ENCODE measurements at regions of chr2 and their contacts with region 1.

Region 1: DNA sequence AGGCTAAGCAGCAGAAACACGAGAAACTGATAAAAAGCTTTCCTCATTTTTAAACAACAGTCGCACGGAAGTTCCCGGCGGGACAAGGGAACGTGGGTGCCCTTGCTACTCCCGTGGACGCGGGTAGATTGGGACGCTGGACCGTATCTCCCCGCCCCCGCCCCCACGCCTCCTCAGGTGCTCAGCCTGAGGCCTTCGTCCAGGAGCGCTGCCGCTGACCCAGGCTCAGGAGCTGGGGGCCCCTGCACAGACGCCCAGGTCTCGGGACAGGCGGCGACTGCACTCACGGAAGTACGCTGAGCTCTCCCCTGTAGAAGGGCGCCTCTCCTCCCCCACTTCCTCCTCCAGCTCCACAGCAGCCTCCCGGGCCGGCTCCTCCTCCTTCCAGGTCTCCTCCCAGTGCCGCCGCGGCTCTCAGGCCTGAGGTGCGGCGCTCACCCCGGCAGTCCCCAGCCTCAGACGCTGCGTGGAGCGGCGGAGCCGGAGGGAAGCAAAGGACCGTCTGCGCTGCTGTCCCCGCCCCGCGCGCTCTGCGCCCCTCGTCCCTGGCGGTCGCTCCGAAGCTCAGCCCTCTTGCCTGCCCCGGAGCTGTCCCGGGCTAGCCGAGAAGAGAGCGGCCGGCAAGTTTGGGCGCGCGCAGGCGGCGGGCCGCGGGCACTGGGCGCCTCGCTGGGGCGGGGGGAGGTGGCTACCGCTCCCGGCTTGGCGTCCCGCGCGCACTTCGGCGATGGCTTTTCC is at the start of gene ITGAV:
- DNase-seq: peak; percentile 82
- H3K4me3 Mint-ChIP-seq: peak within 1 kb of the TSS; percentile 94
- H3K27ac Mint-ChIP-seq: peak within 1 kb of the TSS; percentile 86
- H3K4me1 Mint-ChIP-seq: peaks cover 33% of the 10 kb centered on the region
- H3K27me3 Mint-ChIP-seq: peaks cover 9% of the 10 kb centered on the region
- total RNA-seq, gene ITGAV: 9.8 and 10.6 TPM in 2 replicates

Region 2: DNA sequence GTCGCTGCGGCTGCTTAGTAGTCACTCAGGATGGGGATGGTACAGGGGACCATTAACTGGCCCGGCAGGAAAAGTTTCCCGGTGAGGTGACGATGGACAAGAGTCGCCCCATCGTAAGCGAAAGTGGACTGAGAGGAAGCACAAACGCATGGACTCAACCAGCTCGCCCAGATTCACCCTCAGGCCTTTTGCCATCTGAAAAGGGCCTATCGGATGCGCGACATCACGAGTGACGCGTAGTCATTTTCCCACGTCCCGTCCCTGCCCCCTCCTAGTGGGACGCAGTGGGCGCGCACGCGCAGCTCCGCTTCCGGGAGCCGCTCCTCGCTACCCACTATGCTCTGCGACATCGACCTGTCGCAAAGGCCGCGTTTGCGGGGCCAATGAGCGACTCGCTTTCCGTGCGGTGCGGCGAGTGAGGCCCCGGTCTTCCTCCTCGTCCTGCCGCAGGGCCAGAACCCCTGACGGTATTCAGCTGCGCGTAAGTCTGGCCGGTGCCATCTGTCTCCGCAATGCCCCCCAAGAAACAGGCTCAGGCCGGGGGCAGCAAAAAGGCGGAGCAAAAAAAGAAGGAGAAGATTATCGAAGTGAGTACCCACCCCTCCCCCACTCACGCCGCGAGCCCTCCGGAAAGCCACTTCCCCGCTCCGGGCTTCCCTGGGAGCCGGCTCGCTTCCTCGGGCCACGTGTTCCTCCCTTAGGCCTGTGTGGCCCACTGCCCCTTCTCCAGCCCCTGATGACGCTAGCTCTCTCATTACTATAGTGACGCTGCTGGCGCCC is 103.7 kb before region 1 on chr2 and contains the start of gene ZC3H15:
- intact Hi-C with region 1: loop called (anchors 1 kb)
- DNase-seq: peak; percentile 95
- H3K4me3 Mint-ChIP-seq: peak within 1 kb of the TSS; percentile 99
- H3K27ac Mint-ChIP-seq: peak within 1 kb of the TSS; percentile 99
- H3K4me1 Mint-ChIP-seq: peaks cover 51% of the 10 kb centered on the region
- H3K27me3 Mint-ChIP-seq: no peaks in the 10 kb centered on the region
- total RNA-seq, gene ZC3H15: 93.6 and 94.5 TPM in 2 replicates

Region 3: GRCh38 chr2:186503848-186504606 is 85.8 kb before region 1 on chr2:
- intact Hi-C with region 1: loop called (anchors 5 kb)
- DNase-seq: no peak
- H3K4me3 Mint-ChIP-seq: no peak overlapping the region
- H3K27ac Mint-ChIP-seq: no peak overlapping the region
- H3K4me1 Mint-ChIP-seq: peaks cover 5% of the 10 kb centered on the region
- H3K27me3 Mint-ChIP-seq: no peaks in the 10 kb centered on the region

Region 4: DNA sequence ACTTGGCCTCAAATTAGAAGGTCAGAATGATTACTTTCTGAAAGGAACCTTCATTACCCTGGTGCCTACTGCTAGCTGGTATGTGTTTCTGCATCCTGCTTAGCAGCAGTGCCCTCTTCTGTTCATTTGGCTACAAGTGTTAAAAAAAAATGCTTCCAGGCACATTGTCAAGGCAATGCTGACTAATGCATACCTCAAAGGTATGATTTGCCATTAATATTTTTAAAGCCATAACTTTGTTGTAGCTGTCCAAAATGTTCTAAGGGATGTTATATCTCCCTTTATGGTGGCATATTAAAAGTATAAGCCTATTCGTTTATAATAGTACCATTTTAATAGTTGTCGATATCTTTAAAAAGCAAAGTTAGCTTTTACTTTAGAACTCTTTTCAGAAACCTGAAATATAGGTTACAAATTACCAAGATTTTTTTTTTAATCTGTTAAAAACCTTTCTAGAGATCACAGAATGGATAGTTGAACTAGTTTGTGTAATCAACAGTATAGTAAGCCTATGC is 52.1 kb after region 1 on chr2:
- intact Hi-C with region 1: loop called (anchors 1 kb)
- DNase-seq: no peak
- H3K4me3 Mint-ChIP-seq: no peak overlapping the region
- H3K27ac Mint-ChIP-seq: no peak overlapping the region
- H3K4me1 Mint-ChIP-seq: peaks cover 23% of the 10 kb centered on the region
- H3K27me3 Mint-ChIP-seq: no peaks in the 10 kb centered on the region